ENCODE measurements at regions of chr6 and their contacts with region 1.

Region 1: DNA sequence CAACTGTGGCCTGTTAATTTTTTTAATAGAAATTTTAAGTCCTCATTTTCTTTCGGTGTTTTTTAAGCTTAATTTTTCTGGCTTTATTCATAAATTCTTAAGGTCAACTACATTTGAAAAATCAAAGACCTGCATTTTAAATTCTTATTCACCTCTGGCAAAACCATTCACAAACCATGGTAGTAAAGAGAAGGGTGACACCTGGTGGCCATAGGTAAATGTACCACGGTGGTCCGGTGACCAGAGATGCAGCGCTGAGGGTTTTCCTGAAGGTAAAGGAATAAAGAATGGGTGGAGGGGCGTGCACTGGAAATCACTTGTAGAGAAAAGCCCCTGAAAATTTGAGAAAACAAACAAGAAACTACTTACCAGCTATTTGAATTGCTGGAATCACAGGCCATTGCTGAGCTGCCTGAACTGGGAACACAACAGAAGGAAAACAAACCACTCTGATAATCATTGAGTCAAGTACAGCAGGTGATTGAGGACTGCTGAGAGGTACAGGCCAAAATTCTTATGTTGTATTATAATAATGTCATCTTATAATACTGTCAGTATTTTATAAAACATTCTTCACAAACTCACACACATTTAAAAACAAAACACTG is 10.1 kb downstream of the HFE start:
- DNase-seq: peak in 1 of 2 donors; percentile 82
- H3K4me3 ChIP-seq: no peak overlapping the region
- H3K27ac ChIP-seq: no peak overlapping the region
- H3K4me1 ChIP-seq: no peaks in the 10 kb centered on the region
- H3K27me3 ChIP-seq: no peaks in the 10 kb centered on the region
- CTCF ChIP-seq: peak; percentile 79 to 81 (median 81)

Region 2: GRCh38 chr6:26025894-26026832 is 71.2 kb before region 1 on chr6:
- intact Hi-C with region 1: no loop called
- DNase-seq: peak; percentile 96 to 99
- H3K4me3 ChIP-seq: peak overlapping the region; percentile 64 to 75
- H3K27ac ChIP-seq: peak overlapping the region; percentile 90 to 97
- H3K4me1 ChIP-seq: peaks cover 0 to 19% of the 10 kb centered on the region in 2 donors
- H3K27me3 ChIP-seq: no peaks in the 10 kb centered on the region
- CTCF ChIP-seq: peak; percentile 80 to 87 (median 82)

Region 3: GRCh38 chr6:26064619-26065257 is 32.6 kb before region 1 on chr6:
- intact Hi-C with region 1: loop called (anchors 1 kb)
- DNase-seq: no peak
- H3K4me3 ChIP-seq: no peak overlapping the region
- H3K27ac ChIP-seq: no peak overlapping the region
- H3K4me1 ChIP-seq: no peaks in the 10 kb centered on the region
- H3K27me3 ChIP-seq: no peaks in the 10 kb centered on the region
- CTCF ChIP-seq: peak; percentile 71 to 75 (median 74)

Region 4: DNA sequence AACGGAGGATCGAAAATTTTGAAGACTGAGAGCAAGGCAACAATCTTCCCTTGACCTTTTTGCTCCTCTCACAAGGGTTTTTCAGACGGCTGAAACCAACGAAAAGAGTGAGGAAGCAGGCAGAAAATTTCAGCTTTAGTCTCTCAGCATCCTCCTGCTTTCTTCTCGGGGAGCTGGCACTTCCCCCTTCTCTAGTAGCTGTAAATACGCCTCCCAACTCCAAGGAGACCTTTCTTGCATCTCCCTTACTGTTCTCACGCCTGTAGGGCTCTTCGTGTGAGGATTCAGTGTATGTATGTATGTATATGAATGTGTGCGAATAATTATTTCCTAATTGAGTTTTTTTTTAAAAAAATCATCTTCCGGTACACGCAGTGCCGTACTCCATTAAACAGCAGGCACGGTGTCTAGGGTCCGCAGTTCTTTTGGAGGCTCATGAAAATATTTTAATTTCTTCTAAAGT is 75.2 kb after region 1 on chr6:
- intact Hi-C with region 1: no loop called
- DNase-seq: no peak
- H3K4me3 ChIP-seq: peak overlapping the region; percentile 71 to 87
- H3K27ac ChIP-seq: peak overlapping the region; percentile 96 to 99
- H3K4me1 ChIP-seq: peaks cover 0 to 2% of the 10 kb centered on the region in 2 donors
- H3K27me3 ChIP-seq: no peaks in the 10 kb centered on the region
- CTCF ChIP-seq: no peak

Region 5: DNA sequence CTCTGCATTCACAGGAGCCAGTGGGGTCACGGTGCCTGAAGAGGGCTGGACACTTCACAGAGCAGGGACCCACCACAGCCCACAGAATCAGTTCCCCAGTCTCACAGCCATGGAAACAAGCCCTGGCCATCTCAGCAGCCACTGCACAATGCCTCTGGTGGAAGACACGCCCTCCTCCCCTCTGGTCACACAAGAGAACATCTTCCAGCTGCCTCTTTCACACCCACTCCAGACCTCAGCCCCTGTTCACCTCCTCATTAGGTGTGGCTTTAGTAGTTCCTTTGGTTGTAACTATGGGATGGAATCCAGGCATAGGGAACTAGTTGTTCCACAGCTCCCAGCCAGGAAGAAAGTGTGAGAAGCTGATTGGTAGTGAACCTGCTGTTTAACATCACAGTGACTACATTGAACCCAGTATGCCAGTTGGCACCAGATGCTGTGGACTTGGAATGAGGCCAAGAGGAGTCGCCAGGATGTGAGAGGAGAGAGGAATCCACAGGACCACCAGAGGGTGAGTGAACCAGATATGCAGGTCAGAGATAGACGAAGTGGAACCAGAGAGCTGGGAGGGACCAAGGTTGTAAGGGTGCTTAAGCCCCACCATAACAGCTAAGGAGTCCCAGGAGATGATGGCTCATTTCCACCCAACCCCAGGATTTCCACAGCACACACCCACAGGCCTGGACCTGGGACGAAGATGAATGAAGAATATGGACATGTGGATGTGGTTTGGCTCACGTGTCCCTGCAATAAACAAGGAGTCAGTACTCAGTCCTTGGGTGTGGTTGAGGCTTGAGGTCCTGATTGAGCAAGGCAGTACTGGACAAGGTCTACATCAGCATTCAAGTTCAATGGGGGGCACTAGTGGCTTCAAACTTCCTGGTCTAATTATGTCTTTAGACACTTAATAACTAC is 334.1 kb after region 1 on chr6:
- intact Hi-C with region 1: no loop called
- DNase-seq: peak in 1 of 2 donors; percentile 70
- H3K4me3 ChIP-seq: no peak overlapping the region
- H3K27ac ChIP-seq: peak overlapping the region; percentile 47 to 64
- H3K4me1 ChIP-seq: peaks cover 4 to 13% of the 10 kb centered on the region in 2 donors
- H3K27me3 ChIP-seq: no peaks in the 10 kb centered on the region
- CTCF ChIP-seq: no peak

Measured in ascending aorta (tissue), 2 donors.